ENCODE measurements at regions of chr2 and their contacts with region 1.

Region 1: GRCh38 chr2:164703915-164704706 is 82.8 kb upstream of the GRB14 start:
- DNase-seq: no peak
- CTCF ChIP-seq: no peak

Region 2: GRCh38 chr2:164671664-164672396 is 32.3 kb before region 1 on chr2:
- CTCF ChIA-PET with region 1: no interaction called
- POLR2A ChIA-PET with region 1: no interaction called
- DNase-seq: no peak
- CTCF ChIP-seq: no peak

Region 3: GRCh38 chr2:164717000-164717803 is 13.1 kb after region 1 on chr2:
- CTCF ChIA-PET with region 1: interaction called, 11 read pairs
- POLR2A ChIA-PET with region 1: no interaction called
- DNase-seq: no peak
- CTCF ChIP-seq: peak; percentile 37